Endothelial cell of umbilical vein (primary cell): ENCODE measurements at regions of chr14 and their contacts with region 1.

Region 1: GRCh38 chr14:73753959-73754882 is 40.0 kb upstream of the PNMA1 start:
- DNase-seq: peak; percentile 57
- H3K4me3 ChIP-seq: peak overlapping the region in 1 of 3 experiments; percentile 39
- H3K27ac ChIP-seq: peak overlapping the region; percentile 96
- H3K4me1 ChIP-seq: peaks cover 81% of the 10 kb centered on the region
- H3K27me3 ChIP-seq: no peaks in the 10 kb centered on the region
- CTCF ChIP-seq: no peak
- POLR2A ChIP-seq: no peak

Region 2: DNA sequence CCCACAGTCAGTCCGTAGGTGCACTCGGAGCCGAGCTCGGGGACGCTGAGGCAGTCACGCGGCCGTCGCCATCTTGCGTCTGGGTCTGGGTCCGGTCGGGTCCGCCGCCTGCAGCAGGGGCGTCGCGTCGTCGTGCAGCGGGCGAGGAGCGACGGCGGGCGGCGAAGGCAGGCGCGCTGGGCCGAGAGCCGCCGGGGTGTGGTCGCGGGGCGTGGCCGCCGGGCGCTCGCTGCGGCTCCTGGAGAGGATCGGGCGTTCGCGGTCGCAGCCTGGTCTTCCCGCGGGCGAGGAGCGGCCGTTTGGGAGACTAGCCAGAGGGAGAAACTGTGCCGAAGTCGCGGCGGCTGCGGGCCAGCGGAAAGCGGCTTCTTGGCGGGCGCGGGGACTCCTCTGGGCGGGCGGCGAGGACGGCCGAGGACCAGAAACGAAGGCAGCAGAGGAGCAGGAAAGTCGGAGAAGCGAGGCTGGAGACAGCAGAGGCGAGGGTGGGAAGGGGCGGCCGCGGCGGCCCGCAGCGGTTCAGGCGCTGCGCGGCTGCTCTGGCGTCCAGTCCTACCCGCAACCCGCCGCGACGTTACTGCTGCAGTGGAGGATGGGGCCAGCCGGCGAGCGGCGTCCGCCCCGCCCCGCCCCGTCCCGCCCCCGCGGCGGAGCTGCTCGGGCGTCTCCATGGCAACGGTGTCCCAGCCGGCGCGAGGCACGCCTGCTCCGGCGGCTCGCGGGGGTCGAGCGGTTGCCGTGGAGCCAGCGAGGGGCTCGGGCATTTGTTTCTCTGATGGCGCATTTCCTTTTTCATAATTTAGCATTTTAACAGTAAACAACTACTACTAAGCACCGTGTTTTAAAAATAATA is 40.2 kb before region 1 on chr14 and contains the start of gene PNMA1:
- CTCF ChIA-PET with region 1: interaction called, 9 read pairs
- POLR2A ChIA-PET with region 1: no interaction called
- dilution Hi-C with region 1: no loop called
- intact Hi-C with region 1: loop called (anchors 5 kb)
- DNase-seq: peak; percentile 89
- H3K4me3 ChIP-seq: peak within 1 kb of the TSS; percentile 15 to 81 (median 74)
- H3K27ac ChIP-seq: peak within 1 kb of the TSS; percentile 73
- H3K4me1 ChIP-seq: peaks cover 15% of the 10 kb centered on the region
- H3K27me3 ChIP-seq: no peaks in the 10 kb centered on the region
- CTCF ChIP-seq: no peak
- POLR2A ChIP-seq: peak; percentile 91
- total RNA-seq, gene PNMA1: 82.4 and 82.6 TPM in 2 replicates

Region 3: GRCh38 chr14:73825551-73826188 is 71.4 kb after region 1 on chr14:
- CTCF ChIA-PET with region 1: interaction called, 27 read pairs
- POLR2A ChIA-PET with region 1: no interaction called
- dilution Hi-C with region 1: no loop called
- intact Hi-C with region 1: loop called (anchors 1 kb)
- DNase-seq: peak; percentile 71
- H3K4me3 ChIP-seq: no peak overlapping the region
- H3K27ac ChIP-seq: no peak overlapping the region
- H3K4me1 ChIP-seq: peaks cover 7% of the 10 kb centered on the region
- H3K27me3 ChIP-seq: no peaks in the 10 kb centered on the region
- CTCF ChIP-seq: peak; percentile 89
- POLR2A ChIP-seq: no peak

Region 4: GRCh38 chr14:73886449-73887317 is 132.5 kb after region 1 on chr14 and contains the start of gene ZNF410:
- CTCF ChIA-PET with region 1: no interaction called
- POLR2A ChIA-PET with region 1: no interaction called
- dilution Hi-C with region 1: no loop called
- intact Hi-C with region 1: loop called (anchors 2 kb)
- DNase-seq: peak; percentile 93
- H3K4me3 ChIP-seq: peak within 1 kb of the TSS; percentile 60 to 87 (median 73)
- H3K27ac ChIP-seq: peak within 1 kb of the TSS; percentile 90
- H3K4me1 ChIP-seq: peaks cover 18% of the 10 kb centered on the region
- H3K27me3 ChIP-seq: no peaks in the 10 kb centered on the region
- CTCF ChIP-seq: no peak
- POLR2A ChIP-seq: peak; percentile 45
- total RNA-seq, gene ZNF410: 39.2 and 45.0 TPM in 2 replicates